Mammary epithelial cell (primary cell): ENCODE measurements at regions of chr11 and their contacts with region 1.

Region 1: GRCh38 chr11:132941024-132941646 is 591.2 kb downstream of the OPCML start:
- DNase-seq: peak; percentile 14
- H3K4me3 ChIP-seq: no peak overlapping the region
- H3K27ac ChIP-seq: no peak overlapping the region
- H3K4me1 ChIP-seq: no peaks in the 10 kb centered on the region
- H3K27me3 ChIP-seq: peaks cover 9% of the 10 kb centered on the region
- CTCF ChIP-seq: peak; percentile 86

Region 2: DNA sequence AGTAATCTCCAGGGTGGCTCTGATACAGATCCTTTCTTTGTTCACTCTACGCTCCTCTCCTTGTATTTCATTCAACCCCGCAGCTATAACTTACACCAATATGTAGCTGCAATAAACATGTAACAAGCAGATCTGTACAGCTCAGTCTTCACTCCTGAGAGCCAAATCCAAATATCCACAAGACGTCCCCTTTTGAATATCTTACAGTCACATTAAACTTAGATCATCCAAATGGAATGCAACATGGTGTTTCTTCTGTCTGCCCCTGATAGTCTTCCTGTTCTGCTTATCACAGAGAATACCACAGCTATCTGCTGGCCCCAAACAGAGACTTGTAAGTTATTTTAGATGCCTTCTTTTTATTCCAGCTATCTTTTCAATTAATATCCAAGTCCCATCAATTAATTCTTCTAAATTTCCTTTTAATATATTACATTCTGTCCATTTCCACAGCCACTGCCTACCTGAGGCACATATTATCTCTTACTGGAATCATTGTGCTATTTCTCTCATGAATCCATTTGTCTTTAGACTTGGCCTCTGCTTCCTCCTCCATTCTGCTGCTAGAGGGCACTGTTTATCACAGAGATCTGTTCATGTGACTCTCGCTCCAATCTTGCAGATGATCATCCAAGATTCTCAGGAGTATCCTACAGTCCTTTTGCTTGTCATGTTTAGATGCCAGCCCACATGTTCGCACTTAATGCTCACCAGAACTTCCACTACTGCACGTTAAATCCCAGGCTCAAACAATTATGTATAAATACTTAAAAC is 662.1 kb before region 1 on chr11:
- CTCF ChIA-PET with region 1: interaction called, 4 read pairs
- dilution Hi-C with region 1: no loop called
- in situ Hi-C with region 1: no loop called
- intact Hi-C with region 1: loop called (anchors 10 kb)
- DNase-seq: peak; percentile 24
- H3K4me3 ChIP-seq: no peak overlapping the region
- H3K27ac ChIP-seq: no peak overlapping the region
- H3K4me1 ChIP-seq: no peaks in the 10 kb centered on the region
- H3K27me3 ChIP-seq: no peaks in the 10 kb centered on the region
- CTCF ChIP-seq: peak; percentile 47 to 75

Region 3: DNA sequence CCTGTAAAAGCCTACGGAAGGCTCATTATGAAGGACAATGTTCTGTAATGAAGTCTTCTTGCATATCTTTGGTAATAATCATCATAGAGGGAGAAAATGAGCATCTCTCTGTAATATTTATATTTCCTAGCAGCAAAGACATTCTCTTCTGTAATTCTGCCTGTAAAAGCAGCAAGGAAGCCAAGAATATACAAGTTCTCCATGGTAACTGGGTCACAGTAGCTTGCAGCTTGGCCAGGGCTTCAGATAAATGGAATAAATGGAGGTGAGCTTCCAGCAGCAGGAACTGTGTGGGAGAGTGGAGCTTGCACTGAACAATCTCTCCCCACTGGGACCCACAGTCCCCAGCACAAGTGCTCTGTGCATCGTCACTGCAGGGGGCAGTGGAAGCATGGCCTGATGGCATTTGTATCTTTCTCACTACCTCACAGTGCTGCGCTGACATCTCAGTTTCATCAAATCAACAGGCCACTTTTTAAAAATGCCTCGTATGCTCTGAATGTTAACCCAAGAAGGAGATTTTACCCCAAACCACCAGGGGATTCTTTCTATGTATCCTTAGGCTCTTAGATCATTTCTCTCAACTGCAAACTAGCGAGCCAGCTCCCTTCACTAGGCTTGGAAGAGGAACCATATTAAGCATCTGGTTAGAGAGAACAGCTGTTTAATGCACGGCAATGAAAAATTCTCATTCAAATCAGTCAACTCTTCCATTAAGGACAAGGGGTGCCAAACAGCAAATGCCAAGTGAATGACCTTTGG is 468.5 kb before region 1 on chr11:
- CTCF ChIA-PET with region 1: interaction called, 3 read pairs
- dilution Hi-C with region 1: no loop called
- in situ Hi-C with region 1: no loop called
- intact Hi-C with region 1: loop called (anchors 2 kb)
- DNase-seq: no peak
- H3K4me3 ChIP-seq: no peak overlapping the region
- H3K27ac ChIP-seq: no peak overlapping the region
- H3K4me1 ChIP-seq: peaks cover 17% of the 10 kb centered on the region
- H3K27me3 ChIP-seq: no peaks in the 10 kb centered on the region
- CTCF ChIP-seq: no peak

Region 4: DNA sequence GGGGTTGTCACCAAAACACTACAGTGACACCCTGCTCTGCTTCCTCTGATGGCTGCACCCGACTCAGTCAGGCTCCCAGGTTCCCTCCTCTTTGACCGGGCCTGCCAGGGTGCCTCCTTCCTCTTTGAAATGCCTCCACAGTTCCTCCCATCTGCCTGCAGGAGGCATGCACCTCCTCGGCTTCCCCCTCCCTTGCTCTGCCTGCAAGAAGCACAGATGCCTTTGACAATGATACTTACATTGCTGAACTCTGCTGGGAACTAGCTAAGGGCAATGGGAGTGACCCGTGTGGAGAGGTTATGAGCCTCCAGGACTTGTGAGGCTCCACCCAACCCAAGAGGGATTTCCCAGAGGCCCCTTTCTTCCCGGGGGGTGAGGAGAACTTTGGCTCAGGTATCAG is 82.9 kb before region 1 on chr11:
- CTCF ChIA-PET with region 1: no interaction called
- dilution Hi-C with region 1: no loop called
- in situ Hi-C with region 1: no loop called
- intact Hi-C with region 1: loop called (anchors 1 kb)
- DNase-seq: peak; percentile 42
- H3K4me3 ChIP-seq: no peak overlapping the region
- H3K27ac ChIP-seq: no peak overlapping the region
- H3K4me1 ChIP-seq: peaks cover 8% of the 10 kb centered on the region
- H3K27me3 ChIP-seq: no peaks in the 10 kb centered on the region
- CTCF ChIP-seq: peak; percentile 42 to 72